ENCODE measurements at regions of chr12 and their contacts with region 1.

Region 1: DNA sequence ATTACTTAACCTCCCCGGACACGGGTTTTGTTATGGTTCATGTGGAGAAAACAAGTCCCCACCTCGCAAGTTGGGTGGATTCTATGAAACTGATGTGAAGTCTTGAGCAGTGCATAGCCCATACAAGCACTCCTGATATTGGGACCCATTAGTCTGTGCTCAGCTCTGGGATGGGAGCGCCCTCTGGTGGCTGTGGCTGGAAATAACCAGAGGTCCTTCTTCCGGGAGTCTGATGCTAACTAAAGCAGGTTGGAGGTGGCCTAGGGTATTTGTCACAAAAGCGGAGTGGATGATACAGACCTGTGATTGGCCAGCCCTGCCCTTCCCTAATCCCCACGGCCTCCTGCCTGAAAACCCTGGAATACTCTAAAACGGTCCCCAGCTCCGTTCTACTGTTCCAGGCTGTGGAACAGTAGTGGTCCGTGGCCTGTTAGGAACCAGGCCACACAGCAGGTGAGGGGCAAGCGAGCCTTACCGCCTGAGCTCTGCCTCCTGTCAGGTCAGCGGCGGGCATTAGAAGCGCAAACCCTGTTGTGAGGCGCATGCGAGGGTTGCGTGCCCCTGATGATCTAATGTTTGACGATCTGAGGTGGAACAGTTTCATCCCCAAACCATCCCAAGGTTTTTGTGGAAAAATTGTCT is 6.4 kb downstream of the SLC48A1 start:
- DNase-seq: peak; percentile 88 to 99
- H3K4me3 ChIP-seq: peak overlapping the region in 3 of 4 experiments; percentile 8 to 42 (median 12); a peak in 3 of 8 replicates
- H3K27ac ChIP-seq: no peak overlapping the region
- H3K4me1 ChIP-seq: peaks cover 0 to 18% (median 11%) of the 10 kb centered on the region in 4 experiments; a peak in 5 of 7 replicates
- H3K27me3 ChIP-seq: peaks cover 0 to 9% (median 5%) of the 10 kb centered on the region in 4 experiments; a peak in 4 of 7 replicates
- CTCF ChIP-seq: peak in 2 of 3 experiments; percentile 96; a peak in 3 of 4 replicates
- EP300 ChIP-seq: no peak; a peak in 1 of 3 replicates
- POLR2A ChIP-seq: peak in 1 of 2 experiments; percentile 15; a peak in 1 of 3 replicates
- RAD21 ChIP-seq: peak; percentile 95 to 97

Region 2: DNA sequence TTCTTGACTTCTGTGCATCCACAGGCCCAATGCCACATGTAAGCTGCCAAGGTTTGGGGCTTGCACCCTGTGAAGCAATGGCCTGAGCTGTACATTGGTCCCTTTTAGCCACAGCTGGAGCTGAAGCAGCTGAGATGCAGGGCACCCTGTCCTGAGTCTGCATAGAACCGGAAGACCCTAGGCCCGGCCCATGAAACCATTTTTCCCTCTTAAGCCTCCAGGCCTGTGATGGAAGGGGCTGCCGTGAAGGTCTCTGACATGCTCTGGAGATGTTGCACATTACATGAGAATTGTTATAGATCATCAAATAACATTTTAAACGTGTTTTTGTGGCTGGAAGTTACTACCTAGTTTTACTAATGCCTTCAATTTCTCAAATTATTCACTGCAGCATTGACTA is 262.3 kb before region 1 on chr12:
- CTCF ChIA-PET with region 1: no interaction called
- POLR2A ChIA-PET with region 1: no interaction called
- DNase-seq: no peak
- H3K4me3 ChIP-seq: no peak overlapping the region
- H3K27ac ChIP-seq: no peak overlapping the region
- H3K4me1 ChIP-seq: no peaks in the 10 kb centered on the region
- H3K27me3 ChIP-seq: no peaks in the 10 kb centered on the region
- CTCF ChIP-seq: no peak
- EP300 ChIP-seq: no peak
- POLR2A ChIP-seq: no peak
- RAD21 ChIP-seq: no peak

Region 3: GRCh38 chr12:47686645-47687240 is 92.7 kb before region 1 on chr12:
- CTCF ChIA-PET with region 1: no interaction called
- POLR2A ChIA-PET with region 1: no interaction called
- DNase-seq: no peak
- H3K4me3 ChIP-seq: no peak overlapping the region
- H3K27ac ChIP-seq: no peak overlapping the region
- H3K4me1 ChIP-seq: no peaks in the 10 kb centered on the region
- H3K27me3 ChIP-seq: no peaks in the 10 kb centered on the region
- CTCF ChIP-seq: peak in 2 of 3 experiments; percentile 49 to 54; a peak in 3 of 4 replicates
- EP300 ChIP-seq: no peak
- POLR2A ChIP-seq: no peak
- RAD21 ChIP-seq: peak; percentile 77 to 83

Region 4: DNA sequence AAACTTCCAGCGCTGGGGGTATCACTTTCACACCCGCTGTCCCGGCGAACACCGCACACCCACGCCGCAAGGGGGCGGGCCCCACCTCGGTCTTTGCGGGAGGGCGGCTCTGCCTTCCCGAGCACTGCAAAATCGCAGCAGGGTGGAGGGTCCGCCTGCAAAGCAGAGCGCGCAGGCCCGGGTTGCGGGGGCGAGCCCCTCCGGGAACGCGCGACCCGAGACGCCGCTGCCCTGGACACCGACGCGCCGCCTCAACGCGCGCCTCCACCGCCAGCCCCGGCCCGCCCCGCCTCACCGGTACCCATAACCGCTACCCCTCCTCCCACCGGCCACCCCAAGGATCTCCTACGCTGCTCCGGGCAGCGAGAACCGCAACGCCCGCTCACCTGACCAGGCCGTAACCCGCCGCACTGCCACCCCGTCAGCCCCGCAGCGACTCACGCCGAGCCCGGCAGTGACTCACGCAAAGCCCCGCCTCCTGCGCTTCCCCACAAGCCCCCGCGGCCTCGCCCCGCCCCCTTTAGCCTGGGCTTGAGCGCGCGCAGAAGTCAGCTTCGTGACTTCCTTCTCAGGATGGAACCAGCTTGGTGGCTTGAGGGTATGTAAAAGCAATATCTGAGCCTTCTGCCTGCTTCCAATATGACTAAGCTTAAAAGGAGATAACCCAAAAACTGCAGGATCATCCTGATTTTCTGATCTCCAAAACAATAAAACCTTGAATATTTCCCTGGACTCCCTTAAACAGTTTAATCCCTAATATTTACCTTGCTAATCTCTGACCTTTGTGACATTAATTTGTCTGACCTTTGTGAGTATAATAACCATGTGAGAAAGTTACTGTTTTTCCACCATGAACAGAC is 73.6 kb before region 1 on chr12 and contains the start of gene RPAP3:
- CTCF ChIA-PET with region 1: interaction called, 2,442 read pairs
- POLR2A ChIA-PET with region 1: interaction called, 4 read pairs
- DNase-seq: peak; percentile 67 to 97
- H3K4me3 ChIP-seq: peak within 1 kb of the TSS; percentile 42 to 92 (median 66)
- H3K27ac ChIP-seq: peak within 1 kb of the TSS; percentile 63
- H3K4me1 ChIP-seq: peaks cover 0 to 3% (median 0%) of the 10 kb centered on the region in 4 experiments; a peak in 1 of 7 replicates
- H3K27me3 ChIP-seq: no peaks in the 10 kb centered on the region
- CTCF ChIP-seq: peak; percentile 6 to 43 (median 12); a peak in 3 of 4 replicates
- EP300 ChIP-seq: no peak
- POLR2A ChIP-seq: peak; percentile 87 to 89
- RAD21 ChIP-seq: no peak
- total RNA-seq, gene RPAP3: 49.6 and 60.5 TPM in 2 replicates

Region 5: DNA sequence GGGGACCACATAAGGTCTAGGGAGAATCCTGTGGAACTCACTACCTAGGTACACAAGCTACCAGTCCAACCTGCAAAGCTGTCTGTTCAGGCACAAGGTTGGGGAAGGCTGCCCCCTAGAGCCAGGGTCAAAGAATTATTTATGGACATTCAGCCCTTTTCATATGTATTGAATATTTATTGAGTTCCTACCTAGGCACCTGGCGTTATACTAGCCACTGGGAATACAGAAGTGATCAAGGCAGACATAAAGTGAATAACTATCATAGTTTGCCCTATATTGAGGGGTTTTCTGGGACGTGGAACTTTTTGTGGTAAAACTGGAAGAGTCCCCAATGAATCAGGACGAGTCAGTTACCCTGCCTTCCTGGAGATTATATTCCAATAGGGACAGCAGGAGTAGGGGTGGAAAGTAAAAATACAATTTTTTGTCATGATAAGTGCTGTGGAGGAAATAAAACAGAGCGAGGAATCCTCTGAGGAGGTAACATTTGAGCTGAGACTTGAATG is 12.2 kb before region 1 on chr12:
- CTCF ChIA-PET with region 1: interaction called, 2,442 read pairs
- POLR2A ChIA-PET with region 1: interaction called, 9 read pairs
- DNase-seq: peak in 1 of 2 experiments; percentile 77
- H3K4me3 ChIP-seq: no peak overlapping the region
- H3K27ac ChIP-seq: no peak overlapping the region
- H3K4me1 ChIP-seq: peaks cover 3 to 12% (median 9%) of the 10 kb centered on the region in 4 experiments; a peak in 5 of 7 replicates
- H3K27me3 ChIP-seq: no peaks in the 10 kb centered on the region; a peak in 1 of 7 replicates
- CTCF ChIP-seq: peak; percentile 63 to 89 (median 77)
- EP300 ChIP-seq: no peak
- POLR2A ChIP-seq: no peak
- RAD21 ChIP-seq: peak; percentile 83 to 87

Region 6: DNA sequence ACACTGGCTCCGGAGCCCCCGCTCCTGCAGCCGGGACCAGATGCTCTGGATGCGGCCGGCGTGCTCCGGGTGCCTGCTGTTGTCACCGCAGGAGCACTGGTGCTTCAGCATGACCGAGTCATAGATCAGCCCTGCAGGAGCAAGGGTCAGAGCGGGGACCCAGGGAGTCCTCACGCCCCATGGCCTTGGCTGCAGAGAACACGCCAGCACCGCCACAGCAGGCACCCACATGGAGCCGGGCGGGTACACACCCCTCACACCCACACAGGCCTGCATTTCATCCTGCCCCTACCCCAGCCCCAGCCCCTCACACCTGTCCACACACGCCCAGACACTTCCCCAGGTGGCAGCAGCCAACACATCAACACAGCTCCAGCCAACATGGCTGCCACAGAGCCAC is 12.5 kb after region 1 on chr12:
- CTCF ChIA-PET with region 1: interaction called, 318 read pairs
- POLR2A ChIA-PET with region 1: interaction called, 17 read pairs
- DNase-seq: no peak
- H3K4me3 ChIP-seq: no peak overlapping the region
- H3K27ac ChIP-seq: no peak overlapping the region
- H3K4me1 ChIP-seq: no peaks in the 10 kb centered on the region
- H3K27me3 ChIP-seq: no peaks in the 10 kb centered on the region
- CTCF ChIP-seq: no peak
- EP300 ChIP-seq: no peak
- POLR2A ChIP-seq: no peak
- RAD21 ChIP-seq: no peak

Region 7: DNA sequence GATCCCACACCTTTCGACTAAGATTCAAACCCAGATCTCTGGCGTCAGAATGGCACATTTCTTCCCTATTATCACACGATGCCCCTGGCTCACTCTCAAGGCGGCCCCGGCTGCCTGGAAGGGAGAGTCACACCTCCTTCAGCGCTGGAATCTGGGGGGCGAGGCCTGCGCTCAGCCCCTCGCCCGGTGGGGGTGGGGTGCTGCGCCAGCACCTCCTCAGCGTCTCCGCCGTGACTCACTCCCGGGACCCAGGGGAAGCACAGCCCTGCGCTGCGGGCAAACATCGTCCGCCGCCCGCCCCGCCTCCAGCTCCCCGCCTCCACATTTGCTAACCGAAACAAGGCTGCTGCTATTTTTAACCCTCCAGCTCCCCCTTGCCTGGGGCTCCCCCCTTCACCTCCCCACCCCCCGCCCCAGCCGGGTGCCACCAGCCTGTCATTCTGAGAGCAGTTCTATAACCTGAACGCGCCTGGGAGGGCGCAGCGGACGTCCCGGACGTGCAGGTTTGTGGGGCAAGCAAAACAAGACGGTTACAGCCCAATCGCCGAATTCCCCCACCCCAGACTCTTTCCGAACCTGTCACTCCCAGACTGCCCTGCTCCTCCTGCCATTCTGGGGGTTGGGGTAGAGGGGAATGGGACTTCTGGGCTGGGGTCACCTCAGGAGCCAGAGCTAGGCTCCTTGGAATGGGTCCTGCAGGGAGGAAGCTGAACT is 33.5 kb after region 1 on chr12:
- CTCF ChIA-PET with region 1: interaction called, 318 read pairs
- POLR2A ChIA-PET with region 1: interaction called, 6 read pairs
- DNase-seq: peak; percentile 81 to 83
- H3K4me3 ChIP-seq: peak overlapping the region; percentile 14 to 55 (median 40); a peak in 7 of 8 replicates
- H3K27ac ChIP-seq: peak overlapping the region; percentile 79
- H3K4me1 ChIP-seq: peaks cover 28 to 72% (median 58%) of the 10 kb centered on the region in 4 experiments
- H3K27me3 ChIP-seq: no peaks in the 10 kb centered on the region
- CTCF ChIP-seq: no peak
- EP300 ChIP-seq: peak in 1 of 2 experiments; percentile 77; a peak in 1 of 3 replicates
- POLR2A ChIP-seq: no peak
- RAD21 ChIP-seq: no peak

Region 8: DNA sequence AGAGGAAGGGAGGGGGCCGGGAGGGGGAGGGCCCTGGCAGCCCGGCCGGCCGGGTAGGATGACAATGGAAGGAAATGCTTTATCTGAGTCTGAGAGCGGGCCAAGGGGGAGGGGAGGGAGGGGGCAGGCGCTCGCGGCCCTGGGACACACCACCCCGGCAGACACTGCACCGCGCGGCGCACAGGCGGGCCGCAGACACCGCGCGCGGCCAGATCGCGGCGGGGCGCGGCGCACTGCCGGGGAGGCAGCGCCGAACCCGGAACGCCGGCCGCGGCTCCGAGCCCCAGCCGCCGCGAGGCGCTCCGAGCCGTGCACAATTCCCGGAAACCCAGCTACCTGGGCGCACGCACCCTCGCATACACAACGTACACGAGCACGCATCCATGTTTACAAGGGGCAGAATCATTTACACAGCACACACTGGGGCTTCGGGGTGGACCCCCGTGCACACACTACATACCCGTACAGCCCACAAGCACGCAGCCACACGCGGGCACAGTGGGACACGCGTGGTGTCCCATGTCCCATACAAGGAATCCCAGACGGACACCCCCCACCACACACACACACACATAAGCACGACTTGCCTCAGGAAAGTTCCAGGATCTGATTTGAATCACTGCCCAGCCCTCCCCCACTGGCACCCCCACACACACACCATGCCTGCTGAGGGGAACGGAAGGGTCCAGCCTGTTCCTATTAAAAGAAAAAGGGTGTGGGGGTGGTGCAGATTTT is 40.6 kb after region 1 on chr12 and contains the start of gene HDAC7:
- CTCF ChIA-PET with region 1: interaction called, 2,001 read pairs
- POLR2A ChIA-PET with region 1: interaction called, 6 read pairs
- DNase-seq: no peak
- H3K4me3 ChIP-seq: peak within 1 kb of the TSS; percentile 65 to 79 (median 66)
- H3K27ac ChIP-seq: peak within 1 kb of the TSS; percentile 93
- H3K4me1 ChIP-seq: peaks cover 5 to 41% (median 35%) of the 10 kb centered on the region in 4 experiments
- H3K27me3 ChIP-seq: no peaks in the 10 kb centered on the region; a peak in 2 of 7 replicates
- CTCF ChIP-seq: no peak
- EP300 ChIP-seq: no peak
- POLR2A ChIP-seq: peak in 1 of 2 experiments; percentile 68; a peak in 2 of 3 replicates
- RAD21 ChIP-seq: no peak
- total RNA-seq, gene HDAC7: 82.0 and 84.9 TPM in 2 replicates

Measured in H1 (cell line).